OCI-LY7 (cell line): ENCODE measurements at regions of chr16 and their contacts with region 1.

Region 1: GRCh38 chr16:67546761-67547422 is 15.4 kb upstream of the CTCF start:
- DNase-seq: peak; percentile 90
- H3K4me3 ChIP-seq: peak overlapping the region; percentile 64
- H3K27ac ChIP-seq: peak overlapping the region; percentile 98
- H3K4me1 ChIP-seq: peaks cover 96% of the 10 kb centered on the region
- CTCF ChIP-seq: peak; percentile 97

Region 2: DNA sequence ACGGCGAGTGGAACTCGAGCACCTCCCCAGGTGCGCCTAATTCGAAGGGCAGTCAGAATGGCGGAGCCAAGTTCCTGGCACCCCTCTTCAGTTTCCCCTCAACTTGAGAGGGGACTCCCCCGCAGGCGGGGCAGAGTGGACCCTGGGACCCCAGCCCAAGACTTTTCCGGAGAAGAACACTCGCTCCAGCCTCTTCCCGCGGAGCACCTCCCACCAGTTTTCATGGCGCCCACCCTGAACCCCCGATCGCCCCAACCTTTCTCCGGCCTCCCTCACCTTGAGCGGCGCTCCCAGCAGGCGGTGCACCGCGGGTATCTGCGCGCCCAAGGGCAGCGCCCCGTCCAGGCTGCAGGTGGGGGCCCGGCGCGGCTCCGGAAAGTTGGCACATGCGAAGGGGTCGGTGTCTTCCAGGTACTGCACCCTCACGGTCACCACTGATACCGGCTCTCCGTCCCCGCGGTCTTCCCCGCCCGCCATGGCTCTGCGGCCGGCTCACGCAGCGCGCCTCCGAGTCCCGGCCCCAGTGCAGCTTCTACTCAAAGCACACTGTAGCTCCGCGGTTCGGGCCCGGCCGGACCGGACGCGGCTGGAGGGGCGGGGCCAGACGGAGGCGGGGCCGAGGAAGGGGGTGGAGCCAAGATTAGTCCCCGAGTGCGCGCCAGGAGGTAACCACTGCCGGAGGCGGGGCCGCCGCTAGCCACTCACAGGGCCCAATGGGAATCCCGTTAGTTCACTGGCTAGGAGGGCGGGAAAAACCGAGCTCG is 299.8 kb before region 1 on chr16 and contains the start of gene FHOD1:
- CTCF ChIA-PET with region 1: no interaction called
- POLR2A ChIA-PET with region 1: no interaction called
- intact Hi-C with region 1: no loop called
- DNase-seq: peak; percentile 98
- H3K4me3 ChIP-seq: peak within 1 kb of the TSS; percentile 86
- H3K27ac ChIP-seq: peak within 1 kb of the TSS; percentile 70
- H3K4me1 ChIP-seq: peaks cover 50% of the 10 kb centered on the region
- CTCF ChIP-seq: 0 out of 2 replicates have a peak, but pooled peaks have one; percentile 8
- total RNA-seq, gene FHOD1: 16.0 and 16.5 TPM in 2 replicates

Region 3: GRCh38 chr16:67531212-67531611 is 15.7 kb before region 1 on chr16:
- CTCF ChIA-PET with region 1: interaction called, 10 read pairs
- POLR2A ChIA-PET with region 1: interaction called, 12 read pairs
- intact Hi-C with region 1: no loop called
- DNase-seq: peak; percentile 33
- H3K4me3 ChIP-seq: no peak overlapping the region
- H3K27ac ChIP-seq: peak overlapping the region; percentile 34
- H3K4me1 ChIP-seq: peaks cover 50% of the 10 kb centered on the region
- CTCF ChIP-seq: no peak

Region 4: DNA sequence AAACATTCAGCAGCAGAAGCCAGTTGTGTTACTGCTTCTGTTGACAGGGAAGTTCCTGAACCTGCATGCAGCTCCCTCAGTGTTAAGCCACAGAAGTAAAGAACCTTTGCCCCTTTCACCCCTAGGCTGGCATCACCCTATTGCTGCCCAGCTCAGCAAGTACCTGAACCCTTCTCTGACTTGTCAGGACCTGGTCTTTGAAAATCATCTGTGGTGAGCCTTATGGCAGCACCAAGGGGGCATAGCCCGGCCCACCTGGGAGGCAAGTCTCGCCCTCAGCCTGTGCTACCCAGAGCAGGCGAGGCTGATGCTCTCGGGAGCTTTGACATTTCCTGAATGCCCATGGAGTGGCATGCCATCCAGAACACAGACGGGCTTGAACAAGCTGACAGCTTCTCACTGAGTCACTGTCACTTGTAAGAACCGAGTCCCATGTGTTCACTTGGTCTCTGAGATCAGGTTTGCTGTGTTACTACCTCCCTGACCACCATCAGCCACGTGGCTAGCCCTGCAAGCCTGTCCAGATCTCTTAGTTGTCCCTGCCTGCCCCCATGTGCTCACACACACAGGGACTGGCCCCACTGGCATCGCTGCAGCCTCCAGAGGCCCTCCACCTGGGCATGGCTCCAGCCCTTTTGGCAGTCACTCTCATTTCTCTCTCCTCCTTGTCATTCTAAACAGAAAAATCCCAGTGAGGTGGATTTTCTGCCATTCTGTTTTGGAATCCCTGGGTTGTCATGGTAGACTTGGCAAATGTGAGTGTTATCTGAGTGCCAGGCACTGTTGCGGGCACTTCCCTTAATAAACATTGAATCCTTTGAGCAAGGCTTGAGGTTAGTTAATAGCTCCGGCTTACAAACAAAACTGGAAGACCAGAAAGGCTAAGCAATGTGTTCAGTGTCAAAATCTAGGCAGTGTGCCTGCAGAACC is 95.2 kb after region 1 on chr16:
- CTCF ChIA-PET with region 1: interaction called, 43 read pairs
- POLR2A ChIA-PET with region 1: interaction called, 57 read pairs
- intact Hi-C with region 1: loop called (anchors 1 kb)
- DNase-seq: no peak
- H3K4me3 ChIP-seq: no peak overlapping the region
- H3K27ac ChIP-seq: no peak overlapping the region
- H3K4me1 ChIP-seq: peaks cover 25% of the 10 kb centered on the region
- CTCF ChIP-seq: no peak

Region 5: GRCh38 chr16:67647111-67647651 is 100.3 kb after region 1 on chr16:
- CTCF ChIA-PET with region 1: interaction called, 43 read pairs
- POLR2A ChIA-PET with region 1: interaction called, 57 read pairs
- intact Hi-C with region 1: loop called (anchors 1 kb)
- DNase-seq: no peak
- H3K4me3 ChIP-seq: no peak overlapping the region
- H3K27ac ChIP-seq: no peak overlapping the region
- H3K4me1 ChIP-seq: peaks cover 25% of the 10 kb centered on the region
- CTCF ChIP-seq: no peak

Region 6: DNA sequence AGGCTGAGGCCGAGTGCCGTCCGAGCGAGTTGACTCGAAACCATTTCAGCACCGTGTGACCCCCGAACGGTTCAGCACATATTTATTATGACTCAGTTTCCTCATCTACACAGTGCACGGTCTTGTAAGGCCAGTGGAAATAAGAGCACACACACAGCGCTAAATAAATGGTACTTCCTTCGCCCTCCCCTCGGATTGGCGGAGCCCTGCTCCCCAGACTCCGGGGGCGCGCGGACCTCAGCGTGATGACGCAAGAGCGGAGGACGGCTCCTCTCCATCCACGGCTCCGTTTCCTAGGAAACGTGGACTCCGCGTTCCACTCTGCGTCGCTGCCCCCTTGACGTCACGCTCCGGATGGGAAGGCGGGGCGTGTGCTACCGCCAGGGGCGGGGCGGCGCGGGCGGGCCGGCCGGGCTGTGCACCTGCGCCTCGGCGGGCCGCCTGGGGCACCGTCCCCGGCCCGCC is 113.7 kb after region 1 on chr16 and contains the start of gene PARD6A:
- CTCF ChIA-PET with region 1: no interaction called
- POLR2A ChIA-PET with region 1: interaction called, 11 read pairs
- intact Hi-C with region 1: loop called (anchors 1 kb)
- DNase-seq: peak; percentile 100
- H3K4me3 ChIP-seq: peak within 1 kb of the TSS; percentile 83
- H3K27ac ChIP-seq: peak within 1 kb of the TSS; percentile 81
- H3K4me1 ChIP-seq: peaks cover 15% of the 10 kb centered on the region
- CTCF ChIP-seq: no peak
- total RNA-seq, gene PARD6A: 12.3 and 23.3 TPM in 2 replicates

Region 7: GRCh38 chr16:67806428-67807147 is 259.7 kb after region 1 on chr16 and contains the starts of genes RANBP10 and TSNAXIP1:
- CTCF ChIA-PET with region 1: no interaction called
- POLR2A ChIA-PET with region 1: no interaction called
- intact Hi-C with region 1: loop called (anchors 10 kb)
- DNase-seq: peak; percentile 99
- H3K4me3 ChIP-seq: peak within 1 kb of the TSS; percentile 80
- H3K27ac ChIP-seq: peak within 1 kb of the TSS; percentile 36
- H3K4me1 ChIP-seq: peaks cover 43% of the 10 kb centered on the region
- CTCF ChIP-seq: no peak
- total RNA-seq, gene RANBP10: 6.7 and 12.3 TPM in 2 replicates
- total RNA-seq, gene TSNAXIP1: 0.28 and 0.76 TPM in 2 replicates